ENCODE measurements at regions of chr1 and their contacts with region 1.

Region 1: DNA sequence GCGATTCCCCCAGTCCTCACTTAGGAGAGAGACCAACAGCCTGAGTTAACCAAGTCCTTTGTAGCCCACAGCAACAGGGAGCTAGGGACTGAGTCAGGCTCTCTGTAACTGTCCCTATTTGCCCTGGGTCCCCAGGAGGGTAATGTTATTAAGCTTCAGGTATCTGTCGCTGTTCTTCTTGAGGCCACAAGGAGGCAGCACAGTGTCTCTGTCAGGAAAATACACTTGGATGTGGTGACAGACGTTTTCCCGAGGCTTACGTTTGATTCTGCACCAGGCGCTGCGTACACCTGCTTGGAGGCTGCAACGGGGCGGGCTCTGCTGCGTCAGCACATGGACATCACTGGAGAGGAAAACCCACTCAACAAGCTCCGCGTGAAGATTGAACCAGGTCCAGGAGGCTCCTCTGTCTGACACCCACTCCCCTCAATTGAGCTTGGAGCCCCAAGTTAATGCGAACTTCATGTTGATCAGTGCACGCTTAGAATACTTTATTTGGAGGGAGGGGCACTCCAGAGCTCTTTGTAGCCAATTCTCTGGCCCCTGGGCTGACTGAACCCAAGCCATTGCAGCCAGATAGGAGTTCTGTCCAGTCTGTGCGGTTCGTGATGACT is 10.7 kb upstream of the ELF3 start:
- DNase-seq: peak; percentile 42
- ATAC-seq: peak; percentile 96
- H3K4me3 Mint-ChIP-seq: no peak overlapping the region
- H3K27ac Mint-ChIP-seq: no peak overlapping the region; the same call in 1 of the 2 replicates
- H3K4me1 Mint-ChIP-seq: no peaks in the 10 kb centered on the region
- H3K27me3 Mint-ChIP-seq: no peaks in the 10 kb centered on the region
- CTCF ChIP-seq: peak; percentile 83

Region 2: DNA sequence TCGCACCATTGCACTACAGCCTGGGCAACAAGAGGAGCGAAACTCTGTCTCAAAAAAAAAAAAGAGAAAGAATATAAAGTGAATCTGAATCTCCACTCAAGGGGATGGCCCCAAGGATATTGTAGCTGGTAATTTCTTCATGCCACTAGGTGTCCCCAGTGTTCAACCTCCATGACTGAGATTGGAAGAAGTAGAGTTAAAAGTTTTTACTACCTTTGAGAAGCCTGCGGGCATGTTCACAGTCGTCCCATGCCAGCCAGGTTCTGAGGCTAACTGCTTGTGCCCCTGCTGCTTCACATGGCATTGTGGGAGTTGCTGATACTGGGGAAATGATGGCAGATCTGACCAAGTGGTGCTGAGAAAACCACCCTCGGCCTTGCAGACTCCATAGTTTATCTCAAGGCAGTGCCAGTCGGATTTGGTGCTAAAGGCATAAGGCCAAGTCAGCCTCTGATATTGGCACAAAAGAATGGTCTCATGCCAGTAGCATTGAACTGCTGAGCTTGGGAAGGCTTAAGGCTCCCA is 121.8 kb before region 1 on chr1:
- CTCF ChIA-PET with region 1: interaction called, 10 read pairs
- POLR2A ChIA-PET with region 1: no interaction called
- DNase-seq: peak; percentile 36
- ATAC-seq: peak; percentile 58
- H3K4me3 Mint-ChIP-seq: no peak overlapping the region
- H3K27ac Mint-ChIP-seq: peak overlapping the region; percentile 85; the same call in 1 of the 2 replicates
- H3K4me1 Mint-ChIP-seq: peaks cover 20% of the 10 kb centered on the region
- H3K27me3 Mint-ChIP-seq: no peaks in the 10 kb centered on the region
- CTCF ChIP-seq: peak; percentile 60; the same call in 1 of the 2 replicates

Region 3: GRCh38 chr1:201946224-201946908 is 53.4 kb before region 1 on chr1 and contains the start of gene LMOD1:
- CTCF ChIA-PET with region 1: interaction called, 11 read pairs
- POLR2A ChIA-PET with region 1: interaction called, 3 read pairs
- DNase-seq: peak; percentile 91
- ATAC-seq: peak; percentile 85
- H3K4me3 Mint-ChIP-seq: peak within 1 kb of the TSS; percentile 82
- H3K27ac Mint-ChIP-seq: peak within 1 kb of the TSS; percentile 50
- H3K4me1 Mint-ChIP-seq: peaks cover 40% of the 10 kb centered on the region
- H3K27me3 Mint-ChIP-seq: peaks cover 32% of the 10 kb centered on the region
- CTCF ChIP-seq: no peak
- total RNA-seq, gene LMOD1: 1.5 to 1.9 TPM (median 1.6 TPM) in 3 replicates

Region 4: DNA sequence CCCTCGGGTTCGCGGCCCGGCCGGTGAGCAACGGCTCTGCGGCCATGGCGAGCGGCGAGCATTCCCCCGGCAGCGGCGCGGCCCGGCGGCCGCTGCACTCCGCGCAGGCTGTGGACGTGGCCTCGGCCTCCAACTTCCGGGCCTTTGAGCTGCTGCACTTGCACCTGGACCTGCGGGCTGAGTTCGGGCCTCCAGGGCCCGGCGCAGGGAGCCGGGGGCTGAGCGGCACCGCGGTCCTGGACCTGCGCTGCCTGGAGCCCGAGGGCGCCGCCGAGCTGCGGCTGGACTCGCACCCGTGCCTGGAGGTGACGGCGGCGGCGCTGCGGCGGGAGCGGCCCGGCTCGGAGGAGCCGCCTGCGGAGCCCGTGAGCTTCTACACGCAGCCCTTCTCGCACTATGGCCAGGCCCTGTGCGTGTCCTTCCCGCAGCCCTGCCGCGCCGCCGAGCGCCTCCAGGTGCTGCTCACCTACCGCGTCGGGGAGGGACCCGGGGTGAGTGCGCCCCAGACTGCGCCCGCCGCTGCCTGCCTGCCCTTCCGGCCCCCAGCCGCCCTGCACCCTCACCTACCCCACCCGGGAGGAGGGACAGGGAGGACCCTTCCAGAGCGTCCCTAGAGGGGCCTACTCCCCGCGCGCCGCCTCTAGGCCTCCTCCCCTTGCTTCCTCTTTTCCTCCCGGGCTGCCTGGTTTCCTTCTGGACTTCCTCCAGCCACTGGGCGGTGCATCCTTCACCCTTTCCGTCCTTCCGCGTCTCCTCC is 16.9 kb before region 1 on chr1 and contains the start of gene RNPEP:
- CTCF ChIA-PET with region 1: interaction called, 10 read pairs
- POLR2A ChIA-PET with region 1: no interaction called
- DNase-seq: peak; percentile 60
- ATAC-seq: peak; percentile 76
- H3K4me3 Mint-ChIP-seq: peak within 1 kb of the TSS; percentile 100
- H3K27ac Mint-ChIP-seq: peak within 1 kb of the TSS; percentile 96
- H3K4me1 Mint-ChIP-seq: peaks cover 26% of the 10 kb centered on the region
- H3K27me3 Mint-ChIP-seq: peaks cover 8% of the 10 kb centered on the region
- CTCF ChIP-seq: no peak
- total RNA-seq, gene RNPEP: 57.4 to 61.6 TPM (median 59.2 TPM) in 3 replicates

Region 5: GRCh38 chr1:202105539-202106276 is 106.0 kb after region 1 on chr1:
- CTCF ChIA-PET with region 1: interaction called, 17 read pairs
- POLR2A ChIA-PET with region 1: interaction called, 3 read pairs
- DNase-seq: peak; percentile 83
- ATAC-seq: peak; percentile 90
- H3K4me3 Mint-ChIP-seq: peak overlapping the region; percentile 28
- H3K27ac Mint-ChIP-seq: peak overlapping the region; percentile 94
- H3K4me1 Mint-ChIP-seq: peaks cover 42% of the 10 kb centered on the region
- H3K27me3 Mint-ChIP-seq: no peaks in the 10 kb centered on the region
- CTCF ChIP-seq: no peak

Region 6: GRCh38 chr1:202122639-202123335 is 123.1 kb after region 1 on chr1 and contains the start of gene GPR37L1:
- CTCF ChIA-PET with region 1: interaction called, 149 read pairs
- POLR2A ChIA-PET with region 1: no interaction called
- DNase-seq: peak; percentile 83
- ATAC-seq: peak; percentile 82
- H3K4me3 Mint-ChIP-seq: no peak within 1 kb of the TSS
- H3K27ac Mint-ChIP-seq: no peak within 1 kb of the TSS
- H3K4me1 Mint-ChIP-seq: peaks cover 9% of the 10 kb centered on the region
- H3K27me3 Mint-ChIP-seq: no peaks in the 10 kb centered on the region; the same call in 1 of the 2 replicates
- CTCF ChIP-seq: no peak
- total RNA-seq, gene GPR37L1: 0.07 to 0.16 TPM (median 0.09 TPM) in 3 replicates

Region 7: GRCh38 chr1:202135221-202135721 is 135.5 kb after region 1 on chr1:
- CTCF ChIA-PET with region 1: interaction called, 31 read pairs
- POLR2A ChIA-PET with region 1: no interaction called
- DNase-seq: peak; percentile 62
- ATAC-seq: peak; percentile 77
- H3K4me3 Mint-ChIP-seq: no peak overlapping the region
- H3K27ac Mint-ChIP-seq: peak overlapping the region; percentile 60; the same call in 1 of the 2 replicates
- H3K4me1 Mint-ChIP-seq: peaks cover 23% of the 10 kb centered on the region
- H3K27me3 Mint-ChIP-seq: no peaks in the 10 kb centered on the region
- CTCF ChIP-seq: peak; percentile 75

Measured in WTC11 (cell line).